H1 (cell line): ENCODE measurements at regions of chr2 and their contacts with region 1.

Region 1: GRCh38 chr2:71923887-71924533 is 223.7 kb downstream of the CYP26B1 start:
- DNase-seq: peak; percentile 72 to 80
- H3K4me3 ChIP-seq: no peak overlapping the region
- H3K27ac ChIP-seq: no peak overlapping the region
- H3K4me1 ChIP-seq: no peaks in the 10 kb centered on the region
- H3K27me3 ChIP-seq: no peaks in the 10 kb centered on the region
- CTCF ChIP-seq: peak; percentile 76 to 97 (median 88)
- EP300 ChIP-seq: no peak
- POLR2A ChIP-seq: no peak
- RAD21 ChIP-seq: peak; percentile 85 to 88

Region 2: DNA sequence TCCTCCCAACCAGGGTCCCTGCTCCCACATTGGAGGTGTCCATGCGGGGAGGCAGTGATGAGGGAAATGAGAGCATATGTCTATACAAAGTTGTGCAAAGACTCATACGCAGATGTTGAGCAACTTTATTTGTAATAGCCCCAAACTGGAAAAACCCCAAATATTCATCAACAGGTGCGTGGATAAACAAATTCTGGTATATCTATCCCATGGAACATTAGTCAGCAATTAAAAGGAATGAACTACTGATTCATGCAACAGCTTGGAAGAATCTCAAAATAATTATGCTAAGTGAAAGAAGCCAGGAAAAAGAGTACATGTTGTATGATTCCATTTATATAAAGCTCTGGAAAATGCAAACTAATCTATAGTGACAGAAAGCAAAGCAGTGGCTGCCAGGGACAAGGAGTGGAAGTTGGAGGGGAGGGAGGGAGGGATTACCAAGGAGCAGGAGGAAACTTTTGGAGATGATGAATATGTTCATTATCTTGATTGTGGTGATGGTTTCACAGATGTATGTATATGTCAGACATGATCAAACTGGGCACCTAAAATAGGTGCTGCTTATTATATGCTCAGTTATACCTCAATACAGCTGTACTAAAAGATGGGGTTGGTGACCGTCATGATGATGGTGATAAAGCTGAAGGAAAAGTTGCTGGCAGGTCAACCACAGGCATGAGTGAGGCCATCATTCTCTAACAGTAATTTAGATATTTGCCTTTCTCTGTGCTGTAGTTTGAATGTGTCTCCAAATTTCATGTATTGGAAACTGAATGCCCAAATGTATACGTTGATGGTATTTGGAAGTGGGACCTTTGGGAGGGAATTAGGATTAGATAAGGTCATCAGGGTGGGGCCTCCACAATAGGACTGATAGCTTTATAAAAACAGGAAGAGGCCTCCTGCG is 47.2 kb before region 1 on chr2:
- CTCF ChIA-PET with region 1: interaction called, 10 read pairs
- POLR2A ChIA-PET with region 1: no interaction called
- DNase-seq: no peak
- H3K4me3 ChIP-seq: no peak overlapping the region
- H3K27ac ChIP-seq: no peak overlapping the region
- H3K4me1 ChIP-seq: no peaks in the 10 kb centered on the region; a peak in 1 of 7 replicates
- H3K27me3 ChIP-seq: no peaks in the 10 kb centered on the region
- CTCF ChIP-seq: no peak
- EP300 ChIP-seq: no peak
- POLR2A ChIP-seq: no peak
- RAD21 ChIP-seq: no peak

Region 3: DNA sequence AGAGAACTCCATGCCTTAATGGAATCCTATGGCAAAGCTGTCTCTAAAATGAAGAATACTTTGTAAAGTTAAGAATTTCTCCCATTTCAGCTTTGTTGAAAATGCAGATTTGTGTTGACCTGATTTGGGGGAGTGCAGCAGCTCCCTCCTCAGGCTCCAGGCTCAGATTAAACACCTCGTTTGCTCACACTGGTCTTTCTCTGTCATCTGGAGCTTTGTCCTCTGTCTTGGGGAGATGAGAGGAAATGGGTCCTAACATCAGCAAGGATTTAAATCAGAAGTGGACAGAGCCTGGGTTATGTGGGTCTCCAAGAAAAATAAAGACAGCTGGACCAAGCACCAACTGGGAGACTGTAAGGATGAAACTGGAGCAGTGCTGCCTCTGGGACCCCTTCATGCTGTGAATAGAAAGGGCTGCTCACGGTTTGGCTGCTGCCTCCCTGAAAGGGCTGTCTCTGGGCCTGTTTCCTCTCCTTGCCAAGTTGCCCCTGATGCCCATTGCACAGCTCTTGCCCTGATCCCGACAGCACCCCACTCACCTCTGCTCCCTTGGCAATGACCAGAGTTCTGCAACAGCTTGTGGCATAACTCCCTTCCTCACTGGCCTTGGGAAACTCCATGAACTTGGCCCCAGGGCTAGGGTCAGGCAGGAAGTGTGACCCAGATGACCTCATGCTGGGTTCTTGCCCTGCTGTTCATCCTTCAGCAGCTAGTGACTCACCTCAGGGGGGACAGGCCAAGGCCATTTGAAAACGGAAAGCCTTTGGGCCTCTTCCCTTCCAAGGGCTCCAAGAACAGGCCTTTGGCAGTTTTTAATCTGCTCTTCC is 26.5 kb after region 1 on chr2:
- CTCF ChIA-PET with region 1: interaction called, 22 read pairs
- POLR2A ChIA-PET with region 1: no interaction called
- DNase-seq: no peak
- H3K4me3 ChIP-seq: no peak overlapping the region
- H3K27ac ChIP-seq: no peak overlapping the region
- H3K4me1 ChIP-seq: no peaks in the 10 kb centered on the region; a peak in 1 of 7 replicates
- H3K27me3 ChIP-seq: no peaks in the 10 kb centered on the region
- CTCF ChIP-seq: no peak
- EP300 ChIP-seq: no peak
- POLR2A ChIP-seq: no peak
- RAD21 ChIP-seq: no peak

Region 4: GRCh38 chr2:71995067-71995665 is 71.2 kb after region 1 on chr2:
- CTCF ChIA-PET with region 1: interaction called, 54 read pairs
- POLR2A ChIA-PET with region 1: no interaction called
- DNase-seq: no peak
- H3K4me3 ChIP-seq: no peak overlapping the region
- H3K27ac ChIP-seq: no peak overlapping the region
- H3K4me1 ChIP-seq: peaks cover 0 to 2% (median 0%) of the 10 kb centered on the region in 4 experiments; a peak in 2 of 7 replicates
- H3K27me3 ChIP-seq: no peaks in the 10 kb centered on the region
- CTCF ChIP-seq: peak in 2 of 3 experiments; percentile 49 to 93; a peak in 3 of 4 replicates
- EP300 ChIP-seq: no peak
- POLR2A ChIP-seq: no peak
- RAD21 ChIP-seq: peak; percentile 67 to 68

Region 5: DNA sequence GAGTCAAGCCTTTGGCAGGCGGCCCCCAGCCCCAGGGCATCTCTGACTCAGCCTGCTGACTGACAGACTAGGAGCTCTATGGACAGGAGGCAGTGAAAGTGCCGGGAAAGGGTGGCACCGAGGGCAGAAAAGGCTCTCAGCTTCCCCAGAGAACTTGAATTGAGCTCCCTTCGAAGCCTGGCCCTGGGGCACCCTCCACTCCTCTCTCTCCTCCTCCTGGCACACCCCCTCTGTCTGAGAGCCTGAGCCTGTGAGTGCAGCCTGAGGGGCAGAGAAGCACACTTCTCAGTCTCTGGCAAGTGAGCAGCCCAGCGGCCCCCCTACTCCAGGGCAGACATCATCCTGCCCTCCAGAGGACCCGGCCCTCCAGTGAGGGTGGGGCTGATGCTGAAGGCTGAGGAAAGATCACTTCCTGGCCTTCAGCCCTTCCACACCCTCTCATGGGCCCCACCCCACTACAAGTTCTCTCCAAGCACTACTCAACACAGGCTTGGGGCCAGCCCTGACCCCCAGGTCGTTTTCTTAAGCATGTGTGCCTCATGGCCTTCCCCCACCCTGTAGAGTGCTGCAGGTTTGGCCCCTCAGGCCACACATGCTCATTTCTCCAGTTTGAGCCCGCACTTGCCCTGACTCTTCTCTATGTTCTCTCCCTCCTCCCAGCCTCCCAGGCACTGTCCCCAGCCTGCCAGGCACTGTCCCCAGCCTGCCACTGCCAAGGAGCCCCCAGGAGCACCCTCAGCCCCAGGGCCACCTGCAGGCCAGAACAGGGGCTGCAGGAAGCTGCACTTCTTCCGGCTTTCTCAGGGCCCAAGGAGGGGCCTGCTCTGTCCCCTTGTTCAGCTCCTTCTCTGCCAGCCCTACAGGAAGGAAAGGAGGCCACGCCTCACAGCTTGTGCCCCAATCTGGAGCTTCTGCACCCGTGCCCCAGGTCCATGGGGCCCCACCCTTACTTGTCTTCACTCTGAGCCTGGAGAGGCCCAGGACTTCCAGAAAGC is 191.8 kb after region 1 on chr2:
- CTCF ChIA-PET with region 1: interaction called, 48 read pairs
- POLR2A ChIA-PET with region 1: no interaction called
- DNase-seq: peak; percentile 61 to 78
- H3K4me3 ChIP-seq: no peak overlapping the region
- H3K27ac ChIP-seq: no peak overlapping the region
- H3K4me1 ChIP-seq: no peaks in the 10 kb centered on the region; a peak in 2 of 7 replicates
- H3K27me3 ChIP-seq: peaks cover 0 to 2% (median 0%) of the 10 kb centered on the region in 4 experiments; a peak in 1 of 7 replicates
- CTCF ChIP-seq: peak; percentile 71 to 80 (median 78)
- EP300 ChIP-seq: no peak
- POLR2A ChIP-seq: no peak
- RAD21 ChIP-seq: peak; percentile 58 to 72

Region 6: GRCh38 chr2:72137498-72138010 is 213.5 kb after region 1 on chr2:
- CTCF ChIA-PET with region 1: interaction called, 18 read pairs
- POLR2A ChIA-PET with region 1: no interaction called
- DNase-seq: peak in 1 of 2 experiments; percentile 98
- H3K4me3 ChIP-seq: no peak overlapping the region
- H3K27ac ChIP-seq: no peak overlapping the region
- H3K4me1 ChIP-seq: peaks cover 0 to 11% (median 6%) of the 10 kb centered on the region in 4 experiments; a peak in 5 of 7 replicates
- H3K27me3 ChIP-seq: peaks cover 12 to 32% (median 29%) of the 10 kb centered on the region in 4 experiments
- CTCF ChIP-seq: peak in 2 of 3 experiments; percentile 90 to 98; a peak in 3 of 4 replicates
- EP300 ChIP-seq: no peak
- POLR2A ChIP-seq: no peak
- RAD21 ChIP-seq: peak; percentile 59 to 70